MCF 10A (cell line): ENCODE measurements at regions of chr14 and their contacts with region 1.

Region 1: DNA sequence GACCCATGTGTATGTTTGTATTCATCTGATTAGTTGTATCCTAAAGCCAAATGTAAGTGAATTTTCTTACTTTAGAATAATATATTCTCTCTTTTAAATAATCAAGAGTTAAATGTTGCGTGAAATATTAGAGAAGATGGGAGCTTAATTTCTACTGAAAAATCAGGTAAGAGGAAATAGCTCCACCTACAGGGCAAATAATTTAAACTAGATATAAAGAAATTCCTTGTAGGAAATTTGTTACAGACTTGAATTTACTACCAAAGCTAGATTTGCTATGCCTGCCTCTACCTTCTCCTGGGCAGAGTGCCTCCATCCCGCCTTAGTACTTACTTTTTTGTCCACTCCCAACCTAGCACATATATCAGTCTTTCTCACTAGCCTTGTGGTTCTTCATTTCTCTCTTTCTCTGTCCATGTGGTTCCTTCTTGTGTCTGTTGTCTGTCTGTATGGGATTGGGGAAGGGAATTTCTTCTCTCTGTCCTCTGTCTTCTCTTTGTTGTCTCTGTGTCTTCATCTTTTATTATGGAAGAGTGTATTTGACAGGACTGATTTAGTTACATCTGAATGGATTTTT is 44.7 kb downstream of the PALS1 start:
- DNase-seq: peak; percentile 45
- H3K4me3 Mint-ChIP-seq: no peak overlapping the region
- H3K27ac Mint-ChIP-seq: no peak overlapping the region
- H3K4me1 Mint-ChIP-seq: peaks cover 6% of the 10 kb centered on the region
- H3K27me3 Mint-ChIP-seq: no peaks in the 10 kb centered on the region
- CTCF ChIP-seq: peak; percentile 55

Region 2: DNA sequence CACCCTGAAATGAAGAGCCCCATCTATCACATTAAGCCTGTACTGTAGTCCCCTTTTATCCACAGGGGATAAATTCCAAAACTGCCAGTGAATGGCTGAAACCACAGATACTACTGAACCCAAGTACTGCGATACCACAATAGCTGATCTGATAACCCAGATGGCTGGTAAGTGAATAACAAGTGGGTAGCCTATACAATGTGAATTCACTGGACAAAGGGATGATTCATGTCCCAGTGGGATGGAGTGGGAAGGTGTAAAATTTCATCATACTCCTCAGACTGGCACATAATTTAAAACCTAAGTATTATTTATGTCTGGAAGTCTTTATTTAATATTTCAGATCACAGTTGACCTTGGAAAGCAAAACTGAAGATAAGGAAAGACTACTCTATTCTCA is 576.7 kb before region 1 on chr14:
- CTCF ChIA-PET with region 1: no interaction called
- POLR2A ChIA-PET with region 1: no interaction called
- intact Hi-C with region 1: no loop called
- DNase-seq: peak; percentile 69
- H3K4me3 Mint-ChIP-seq: no peak overlapping the region
- H3K27ac Mint-ChIP-seq: peak overlapping the region; percentile 18
- H3K4me1 Mint-ChIP-seq: peaks cover 6% of the 10 kb centered on the region
- H3K27me3 Mint-ChIP-seq: no peaks in the 10 kb centered on the region
- CTCF ChIP-seq: no peak

Region 3: GRCh38 chr14:66868004-66868403 is 418.0 kb before region 1 on chr14:
- CTCF ChIA-PET with region 1: no interaction called
- POLR2A ChIA-PET with region 1: no interaction called
- intact Hi-C with region 1: loop called (anchors 5 kb)
- DNase-seq: no peak
- H3K4me3 Mint-ChIP-seq: no peak overlapping the region
- H3K27ac Mint-ChIP-seq: no peak overlapping the region
- H3K4me1 Mint-ChIP-seq: no peaks in the 10 kb centered on the region
- H3K27me3 Mint-ChIP-seq: no peaks in the 10 kb centered on the region
- CTCF ChIP-seq: no peak

Region 4: GRCh38 chr14:67166450-67166853 is 119.5 kb before region 1 on chr14:
- CTCF ChIA-PET with region 1: interaction called, 76 read pairs
- POLR2A ChIA-PET with region 1: interaction called, 11 read pairs
- intact Hi-C with region 1: loop called (anchors 1 kb)
- DNase-seq: peak; percentile 62
- H3K4me3 Mint-ChIP-seq: no peak overlapping the region
- H3K27ac Mint-ChIP-seq: no peak overlapping the region
- H3K4me1 Mint-ChIP-seq: peaks cover 8% of the 10 kb centered on the region
- H3K27me3 Mint-ChIP-seq: no peaks in the 10 kb centered on the region
- CTCF ChIP-seq: peak; percentile 79

Region 5: DNA sequence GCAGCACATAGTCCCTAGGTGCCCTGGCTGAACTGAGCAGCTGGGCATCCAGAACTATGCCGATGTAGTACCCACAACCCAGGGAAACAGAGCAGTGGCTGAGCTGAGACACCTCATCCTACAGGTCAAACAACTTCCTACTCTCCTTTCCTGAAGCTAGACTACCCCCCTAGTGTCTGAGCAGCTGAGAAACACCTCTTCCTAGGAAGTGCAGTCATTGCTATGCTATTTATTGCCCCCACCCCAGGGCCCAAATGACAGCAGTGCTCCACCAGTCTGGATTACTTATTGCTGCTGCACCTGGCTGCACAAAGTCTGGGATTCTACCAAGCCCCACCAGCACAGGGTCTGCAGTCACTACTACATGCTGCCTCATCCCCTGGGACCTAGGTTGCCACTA is 113.4 kb before region 1 on chr14:
- CTCF ChIA-PET with region 1: interaction called, 76 read pairs
- POLR2A ChIA-PET with region 1: interaction called, 11 read pairs
- intact Hi-C with region 1: no loop called
- DNase-seq: no peak
- H3K4me3 Mint-ChIP-seq: no peak overlapping the region
- H3K27ac Mint-ChIP-seq: no peak overlapping the region
- H3K4me1 Mint-ChIP-seq: peaks cover 7% of the 10 kb centered on the region
- H3K27me3 Mint-ChIP-seq: no peaks in the 10 kb centered on the region
- CTCF ChIP-seq: no peak

Region 6: GRCh38 chr14:67187210-67187609 is 98.8 kb before region 1 on chr14:
- CTCF ChIA-PET with region 1: interaction called, 5 read pairs
- POLR2A ChIA-PET with region 1: no interaction called
- intact Hi-C with region 1: loop called (anchors 5 kb)
- DNase-seq: peak; percentile 90
- H3K4me3 Mint-ChIP-seq: no peak overlapping the region
- H3K27ac Mint-ChIP-seq: no peak overlapping the region
- H3K4me1 Mint-ChIP-seq: peaks cover 9% of the 10 kb centered on the region
- H3K27me3 Mint-ChIP-seq: no peaks in the 10 kb centered on the region
- CTCF ChIP-seq: no peak